Pancreas (tissue), 10 donors: ENCODE measurements at regions of chr2 and their contacts with region 1.

Region 1: DNA sequence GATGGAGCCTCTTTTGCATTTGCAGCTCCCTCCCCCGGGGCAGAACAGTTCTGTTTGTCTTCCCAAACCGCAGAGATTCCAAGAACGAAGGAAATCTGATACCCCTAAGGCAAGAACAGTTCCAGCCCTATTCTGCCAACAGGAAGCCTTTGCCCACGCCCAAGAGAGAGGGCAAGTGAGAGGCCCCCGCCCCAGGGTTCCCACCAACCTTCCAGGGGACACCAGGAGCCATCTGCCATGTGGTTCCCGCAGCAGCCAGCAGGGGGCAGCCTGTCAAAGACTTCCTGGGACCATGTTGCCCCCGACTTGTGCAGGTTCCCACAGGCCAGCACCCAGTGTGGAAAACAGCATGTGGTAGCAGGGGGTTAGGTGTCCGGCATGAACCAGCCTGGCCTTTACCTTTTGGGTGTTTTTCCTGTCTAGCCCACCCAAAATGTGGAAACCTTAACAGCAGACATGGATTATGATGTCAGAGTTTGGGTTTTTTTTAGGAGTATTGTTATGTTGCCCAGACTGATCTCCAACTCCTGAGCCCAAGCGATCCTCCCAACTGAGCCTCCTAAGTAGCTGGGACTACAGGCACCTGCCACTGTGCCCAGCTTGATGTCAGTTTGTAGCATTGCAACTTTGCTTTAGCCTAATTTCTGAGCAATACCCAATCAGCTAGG is 21.7 kb upstream of the EFHD1 start:
- DNase-seq: peak in 4 of 6 donors; percentile 56 to 86 (median 70)
- ATAC-seq: peak in 3 of 4 donors; percentile 67 to 80 (median 72)
- H3K4me3 ChIP-seq: no peak overlapping the region
- H3K27ac ChIP-seq: no peak overlapping the region
- H3K4me1 ChIP-seq: no peaks in the 10 kb centered on the region
- H3K27me3 ChIP-seq: no peaks in the 10 kb centered on the region
- CTCF ChIP-seq: peak; percentile 56 to 85 (median 66)

Region 2: GRCh38 chr2:232260075-232260474 is 351.6 kb before region 1 on chr2:
- intact Hi-C with region 1: no loop called
- DNase-seq: no peak
- ATAC-seq: peak in 2 of 4 donors; percentile 41 to 53
- H3K4me3 ChIP-seq: no peak overlapping the region
- H3K27ac ChIP-seq: no peak overlapping the region
- H3K4me1 ChIP-seq: no peaks in the 10 kb centered on the region
- H3K27me3 ChIP-seq: no peaks in the 10 kb centered on the region
- CTCF ChIP-seq: no peak

Region 3: GRCh38 chr2:233033672-233034071 is 422.0 kb after region 1 on chr2:
- intact Hi-C with region 1: loop called in 1 of 3 experiments (anchors 10 kb)
- DNase-seq: no peak
- ATAC-seq: no peak
- H3K4me3 ChIP-seq: no peak overlapping the region
- H3K27ac ChIP-seq: no peak overlapping the region
- H3K4me1 ChIP-seq: no peaks in the 10 kb centered on the region
- H3K27me3 ChIP-seq: no peaks in the 10 kb centered on the region
- CTCF ChIP-seq: no peak